OCI-LY7 (cell line): ENCODE measurements at regions of chr19 and their contacts with region 1.

Region 1: GRCh38 chr19:23395041-23395721 is at the start of gene ZNF91:
- DNase-seq: peak; percentile 97
- H3K4me3 ChIP-seq: peak within 1 kb of the TSS; percentile 92
- H3K27ac ChIP-seq: peak within 1 kb of the TSS; percentile 63
- H3K4me1 ChIP-seq: peaks cover 14% of the 10 kb centered on the region
- CTCF ChIP-seq: no peak
- total RNA-seq, gene ZNF91: 39.2 and 39.3 TPM in 2 replicates

Region 2: GRCh38 chr19:23273590-23274413 is 121.4 kb before region 1 on chr19:
- CTCF ChIA-PET with region 1: no interaction called
- POLR2A ChIA-PET with region 1: interaction called, 4 read pairs
- intact Hi-C with region 1: loop called (anchors 10 kb)
- DNase-seq: peak; percentile 94
- H3K4me3 ChIP-seq: peak overlapping the region; percentile 92
- H3K27ac ChIP-seq: peak overlapping the region; percentile 82
- H3K4me1 ChIP-seq: peaks cover 10% of the 10 kb centered on the region
- CTCF ChIP-seq: peak; percentile 67

Region 3: DNA sequence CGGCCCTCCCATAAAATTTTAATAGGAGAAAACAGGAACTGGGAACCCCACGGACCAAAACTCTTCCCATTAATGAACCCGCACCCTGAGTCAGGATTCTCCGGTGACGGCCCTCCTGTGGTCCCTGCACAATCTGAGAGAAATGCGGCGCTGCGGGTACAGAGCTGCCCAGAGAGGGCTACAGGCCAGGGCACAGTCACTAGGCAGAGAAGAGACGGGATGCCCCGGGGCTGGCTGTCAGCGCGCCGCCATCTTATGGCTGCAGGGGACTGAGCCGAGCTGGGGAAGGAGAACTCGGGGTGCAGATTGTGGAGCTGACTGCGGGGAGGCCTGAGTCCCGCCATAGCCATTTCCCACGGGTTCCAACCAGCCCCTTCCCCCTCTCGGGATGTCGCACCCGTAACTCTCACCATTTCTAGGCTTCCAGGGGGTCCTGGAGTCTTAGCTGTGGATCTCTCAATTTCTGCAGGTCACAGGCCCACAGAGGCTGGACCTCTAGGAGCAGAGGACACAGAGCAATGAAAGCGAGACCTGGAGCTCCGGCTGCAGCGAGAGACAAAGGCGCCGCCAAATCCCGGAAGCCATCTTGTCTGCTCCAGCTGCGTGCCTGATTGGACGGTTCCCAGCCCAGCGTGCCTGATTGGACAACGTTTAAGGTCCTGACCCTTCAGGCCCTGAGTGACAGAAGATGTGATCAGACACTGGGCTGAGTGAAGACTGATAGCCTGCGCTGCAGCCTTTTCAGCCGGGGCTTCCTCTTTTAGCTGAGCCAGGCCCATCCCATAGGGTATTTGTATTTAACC is 291.6 kb after region 1 on chr19 and contains the start of gene ZNF675:
- CTCF ChIA-PET with region 1: no interaction called
- POLR2A ChIA-PET with region 1: interaction called, 4 read pairs
- intact Hi-C with region 1: loop called (anchors 10 kb)
- DNase-seq: peak; percentile 96
- H3K4me3 ChIP-seq: peak within 1 kb of the TSS; percentile 77
- H3K27ac ChIP-seq: peak within 1 kb of the TSS; percentile 83
- H3K4me1 ChIP-seq: peaks cover 16% of the 10 kb centered on the region
- CTCF ChIP-seq: peak; percentile 19; the same call in 1 of the 2 replicates
- total RNA-seq, gene ZNF675: 22.6 and 29.7 TPM in 2 replicates